ENCODE measurements at regions of chr7 and their contacts with region 1.

Region 1: DNA sequence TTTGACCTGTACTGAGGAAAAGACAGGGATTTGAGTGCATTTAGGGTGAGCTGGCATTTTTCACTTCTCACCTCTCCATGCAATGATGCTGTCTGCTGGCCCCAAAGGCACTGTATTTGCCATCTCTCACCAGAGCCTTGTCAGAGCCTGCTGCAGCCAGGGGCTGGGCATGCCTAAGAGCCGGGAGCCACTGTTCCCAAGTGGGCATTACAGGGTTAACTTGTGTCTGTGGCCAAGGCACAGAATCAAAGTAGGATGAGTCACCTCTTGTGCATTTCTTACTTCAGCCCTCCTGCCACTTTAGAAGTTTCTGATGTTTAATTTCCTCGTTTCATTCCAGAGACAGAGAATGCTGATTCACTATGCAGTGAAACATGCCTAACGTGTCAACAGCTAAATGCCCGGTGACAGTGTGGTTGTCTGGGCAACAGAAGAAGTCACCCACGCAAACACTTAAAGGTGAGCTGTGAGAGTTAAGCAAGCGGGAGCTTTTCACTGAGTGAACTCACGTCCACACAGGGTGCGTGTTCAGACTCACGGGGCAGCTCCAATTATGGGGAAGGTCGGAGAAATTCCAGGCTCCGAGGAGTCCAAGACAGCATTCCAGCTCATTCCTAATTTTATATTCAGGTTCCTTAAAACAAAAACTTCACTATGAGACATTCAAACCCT is 57.1 kb upstream of the IGFBP3 start:
- DNase-seq: peak in 1 of 2 donors; percentile 72
- ATAC-seq: peak; percentile 51
- H3K4me3 ChIP-seq: no peak overlapping the region
- H3K27ac ChIP-seq: peak overlapping the region; percentile 85 to 92
- H3K4me1 ChIP-seq: peaks cover 2 to 9% of the 10 kb centered on the region in 2 donors
- H3K27me3 ChIP-seq: no peaks in the 10 kb centered on the region

Region 2: DNA sequence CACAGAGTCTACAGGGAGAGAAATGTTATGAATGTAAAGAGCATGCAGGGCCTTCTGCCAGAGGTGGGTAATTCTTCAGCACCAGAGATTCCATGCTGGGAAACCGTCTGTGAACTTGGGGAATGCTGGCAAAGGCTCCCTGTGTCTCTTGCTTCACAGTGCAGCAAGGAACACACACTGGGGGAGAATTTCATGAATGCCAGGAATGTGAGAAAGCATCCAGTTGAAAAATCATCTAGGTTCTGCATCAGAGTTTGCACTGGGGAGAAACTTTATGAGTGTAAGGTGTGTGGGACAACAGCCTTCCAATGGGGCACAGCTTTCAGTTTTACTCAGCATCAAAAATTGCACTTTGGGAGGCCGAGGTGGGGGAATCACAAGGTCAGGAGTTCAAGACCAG is 167.3 kb after region 1 on chr7:
- intact Hi-C with region 1: loop called (anchors 5 kb)
- DNase-seq: peak in 1 of 2 donors; percentile 59
- ATAC-seq: peak; percentile 62
- H3K4me3 ChIP-seq: no peak overlapping the region
- H3K27ac ChIP-seq: no peak overlapping the region
- H3K4me1 ChIP-seq: peaks cover 11 to 23% of the 10 kb centered on the region in 2 donors
- H3K27me3 ChIP-seq: no peaks in the 10 kb centered on the region

Region 3: GRCh38 chr7:46291064-46291463 is 312.9 kb after region 1 on chr7:
- intact Hi-C with region 1: loop called in 1 of 2 experiments (anchors 5 kb)
- DNase-seq: no peak
- ATAC-seq: no peak
- H3K4me3 ChIP-seq: no peak overlapping the region
- H3K27ac ChIP-seq: no peak overlapping the region
- H3K4me1 ChIP-seq: peaks cover 0 to 4% of the 10 kb centered on the region in 2 donors
- H3K27me3 ChIP-seq: no peaks in the 10 kb centered on the region

Region 4: DNA sequence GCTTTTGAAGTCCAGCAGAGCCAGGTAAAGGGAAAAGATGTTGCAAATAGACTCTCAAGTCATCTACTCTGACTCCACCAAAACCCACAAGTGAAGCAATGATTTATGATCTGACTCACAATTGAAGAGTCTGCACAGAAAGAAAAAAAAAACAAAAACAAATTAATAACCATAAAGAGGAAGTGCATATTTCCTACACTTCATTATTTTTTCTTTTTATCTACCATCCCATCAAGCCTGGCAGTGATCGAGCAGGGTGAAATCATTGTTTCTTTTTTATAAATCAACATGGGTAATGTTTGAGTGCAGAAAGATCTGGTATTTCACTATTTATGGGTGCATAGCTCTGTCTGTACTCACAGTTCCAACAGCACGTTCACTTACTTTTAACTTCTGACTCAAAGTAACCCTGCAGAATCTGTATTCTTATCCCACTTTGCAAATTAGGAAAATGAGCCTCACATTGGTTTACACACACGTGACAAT is 774.8 kb after region 1 on chr7:
- intact Hi-C with region 1: loop called in 1 of 2 experiments (anchors 10 kb)
- DNase-seq: no peak
- ATAC-seq: peak; percentile 85
- H3K4me3 ChIP-seq: no peak overlapping the region
- H3K27ac ChIP-seq: peak overlapping the region; percentile 36 to 62
- H3K4me1 ChIP-seq: peaks cover 9 to 16% of the 10 kb centered on the region in 2 donors
- H3K27me3 ChIP-seq: no peaks in the 10 kb centered on the region

Measured in aorta (tissue), 5 donors.